ENCODE measurements at regions of chr9 and their contacts with region 1.

Region 1: GRCh38 chr9:37508834-37509206 is 23.1 kb downstream of the POLR1E start:
- DNase-seq: no peak
- CTCF ChIP-seq: no peak

Region 2: GRCh38 chr9:37496020-37496419 is 12.8 kb before region 1 on chr9:
- CTCF ChIA-PET with region 1: interaction called, 12 read pairs
- POLR2A ChIA-PET with region 1: interaction called, 3 read pairs
- DNase-seq: no peak
- CTCF ChIP-seq: no peak

Measured in GM10248 (cell line).